ENCODE measurements at regions of chrX and their contacts with region 1.

Region 1: DNA sequence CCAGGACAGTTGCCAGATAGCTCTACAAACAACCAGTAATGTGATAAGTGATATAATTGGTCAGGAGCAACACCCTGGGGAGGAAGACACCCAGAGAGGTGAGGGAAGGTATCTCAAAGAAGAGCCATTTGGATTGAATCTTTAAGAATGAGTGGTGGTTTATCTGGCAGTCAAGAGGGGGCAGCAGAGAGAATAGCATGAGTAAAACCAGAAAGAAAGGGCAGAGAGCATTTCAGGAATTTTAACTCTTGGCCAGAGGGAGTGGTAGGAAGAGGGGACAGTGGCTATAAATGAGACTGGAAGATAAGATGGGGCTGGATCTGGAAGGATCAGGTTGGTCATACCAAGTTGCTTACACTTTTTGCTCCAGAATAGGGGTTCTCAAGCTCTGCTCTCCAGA is 5.9 kb upstream of the SEPTIN6 start:
- DNase-seq: peak; percentile 75
- H3K4me3 Mint-ChIP-seq: no peak overlapping the region
- H3K27ac Mint-ChIP-seq: peak overlapping the region; percentile 47
- H3K4me1 Mint-ChIP-seq: peaks cover 6% of the 10 kb centered on the region
- H3K27me3 Mint-ChIP-seq: no peaks in the 10 kb centered on the region

Region 2: GRCh38 chrX:119288890-119289383 is 409.9 kb before region 1 on chrX:
- intact Hi-C with region 1: no loop called
- DNase-seq: no peak
- H3K4me3 Mint-ChIP-seq: no peak overlapping the region
- H3K27ac Mint-ChIP-seq: no peak overlapping the region
- H3K4me1 Mint-ChIP-seq: no peaks in the 10 kb centered on the region
- H3K27me3 Mint-ChIP-seq: peaks cover 7% of the 10 kb centered on the region

Region 3: GRCh38 chrX:119729408-119730201 is 30.8 kb after region 1 on chrX:
- intact Hi-C with region 1: loop called (anchors 5 kb)
- DNase-seq: peak; percentile 88
- H3K4me3 Mint-ChIP-seq: no peak overlapping the region
- H3K27ac Mint-ChIP-seq: no peak overlapping the region
- H3K4me1 Mint-ChIP-seq: peaks cover 5% of the 10 kb centered on the region
- H3K27me3 Mint-ChIP-seq: no peaks in the 10 kb centered on the region

Region 4: DNA sequence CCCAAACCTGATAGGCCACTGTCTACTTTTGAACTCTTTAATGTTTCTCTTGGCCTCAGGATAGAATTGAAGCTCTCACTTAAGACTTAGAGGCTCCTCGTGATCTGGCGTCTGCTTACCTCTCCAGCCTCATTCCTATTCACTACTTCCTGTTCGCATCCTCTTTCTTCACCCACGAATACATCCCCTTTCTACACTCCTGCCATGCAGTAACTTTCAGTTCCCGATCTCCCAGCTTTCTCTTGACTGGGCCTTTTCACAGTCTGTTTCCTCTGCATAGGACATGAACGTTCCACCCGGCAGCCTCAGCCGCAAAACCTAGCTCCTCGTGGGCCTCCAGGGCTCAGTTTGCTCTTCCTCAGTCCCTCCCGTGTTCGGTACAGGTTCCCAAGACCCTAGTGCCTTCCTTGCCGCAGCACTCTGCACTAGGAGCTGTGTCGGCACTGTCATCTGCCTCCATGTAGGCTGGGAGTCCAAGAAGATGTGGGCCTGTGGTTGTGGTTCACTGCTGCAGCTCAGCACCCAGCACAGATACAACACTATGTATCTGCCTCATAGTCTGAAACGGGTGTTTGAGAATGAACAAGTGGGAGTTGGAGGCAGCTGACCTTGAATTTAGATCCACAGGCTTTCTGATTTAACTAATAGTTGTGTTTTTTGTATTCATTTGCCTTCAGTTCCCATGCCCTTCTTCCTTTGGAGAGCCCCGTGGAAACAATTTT is 76.8 kb after region 1 on chrX:
- intact Hi-C with region 1: loop called (anchors 5 kb)
- DNase-seq: no peak
- H3K4me3 Mint-ChIP-seq: no peak overlapping the region
- H3K27ac Mint-ChIP-seq: no peak overlapping the region
- H3K4me1 Mint-ChIP-seq: peaks cover 9% of the 10 kb centered on the region
- H3K27me3 Mint-ChIP-seq: no peaks in the 10 kb centered on the region